ENCODE measurements at regions of chr1 and their contacts with region 1.

Region 1: DNA sequence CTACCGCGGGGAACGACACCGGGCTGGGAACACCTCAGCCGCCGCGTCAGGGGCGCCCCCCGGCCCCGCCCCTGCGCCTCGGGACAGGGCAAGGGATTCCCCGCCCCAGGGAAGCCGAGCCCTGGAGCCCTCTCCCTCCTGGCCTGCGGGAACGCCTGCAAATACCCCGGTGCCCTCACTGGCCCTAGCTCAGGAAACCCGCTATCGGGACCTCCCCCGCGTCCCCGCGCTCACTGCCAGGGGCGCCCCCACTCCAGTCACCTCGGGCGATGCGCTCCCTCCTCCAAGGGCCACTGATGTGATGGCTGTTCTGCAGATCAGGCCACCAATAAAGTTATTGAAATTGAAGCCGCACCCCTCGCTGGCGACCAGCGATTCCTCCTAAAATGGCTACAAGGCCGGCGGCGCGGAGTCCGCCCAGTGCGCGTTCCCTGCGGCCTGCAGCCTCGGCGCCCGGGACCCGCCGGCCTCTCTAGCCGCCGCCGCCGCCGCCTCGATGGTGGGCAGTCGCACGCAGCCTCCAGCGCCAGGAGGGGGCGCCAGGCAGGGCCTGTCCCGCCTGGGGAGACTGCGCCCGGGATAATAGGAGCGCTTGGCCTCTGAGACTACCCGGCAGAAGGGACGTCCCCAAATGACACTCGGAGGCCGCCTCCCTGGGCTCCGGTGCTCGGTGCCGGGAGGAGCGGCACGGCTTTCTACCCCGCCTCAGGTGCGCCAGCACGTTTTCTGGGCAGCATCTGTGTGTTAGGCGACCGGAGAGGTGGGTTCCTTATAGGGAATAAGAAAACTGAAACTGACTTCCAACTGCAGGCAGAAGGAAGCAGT is at the start of gene PRKAB2:
- DNase-seq: peak; percentile 77
- ATAC-seq: peak; percentile 92
- H3K4me3 ChIP-seq: peak within 1 kb of the TSS; percentile 93
- H3K27ac ChIP-seq: peak within 1 kb of the TSS; percentile 91
- H3K4me1 ChIP-seq: no peaks in the 10 kb centered on the region
- H3K27me3 ChIP-seq: no peaks in the 10 kb centered on the region
- CTCF ChIP-seq: peak; percentile 76 to 85 (median 84)
- EP300 ChIP-seq: peak in 1 of 2 experiments; percentile 11; a peak in 1 of 4 replicates
- POLR2A ChIP-seq: peak; percentile 84
- RAD21 ChIP-seq: peak; percentile 60
- polyA plus RNA-seq, gene PRKAB2: 2.2 to 2.7 TPM

Region 2: DNA sequence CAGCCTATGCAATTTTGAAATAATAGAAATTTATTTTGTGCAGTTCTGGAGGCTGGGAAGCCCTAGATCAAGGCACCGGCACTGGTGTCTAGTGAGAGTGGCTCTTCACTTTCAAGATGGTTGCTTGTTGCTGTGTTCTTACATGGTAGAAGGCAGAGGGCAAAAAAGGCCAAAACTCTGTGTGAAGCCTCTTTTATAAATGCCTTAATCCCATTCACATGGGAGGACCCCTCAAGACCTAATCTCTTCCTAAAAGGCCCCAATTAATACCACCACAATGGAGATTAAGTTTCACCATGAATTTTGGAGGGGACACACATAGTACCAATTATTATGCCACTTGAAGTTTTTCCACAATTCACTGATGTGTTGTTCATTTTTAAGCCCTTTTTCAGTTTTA is 21.1 kb before region 1 on chr1:
- CTCF ChIA-PET with region 1: no interaction called
- POLR2A ChIA-PET with region 1: no interaction called
- RAD21 ChIA-PET with region 1: no interaction called
- SMC1A ChIA-PET with region 1: no interaction called
- in situ Hi-C with region 1: no loop called
- intact Hi-C with region 1: no loop called
- DNase-seq: no peak
- ATAC-seq: no peak
- H3K4me3 ChIP-seq: no peak overlapping the region
- H3K27ac ChIP-seq: no peak overlapping the region
- H3K4me1 ChIP-seq: no peaks in the 10 kb centered on the region
- H3K27me3 ChIP-seq: no peaks in the 10 kb centered on the region
- CTCF ChIP-seq: no peak
- EP300 ChIP-seq: no peak
- POLR2A ChIP-seq: no peak
- RAD21 ChIP-seq: no peak

Region 3: GRCh38 chr1:147162093-147162492 is 10.3 kb before region 1 on chr1:
- CTCF ChIA-PET with region 1: interaction called, 13 read pairs
- POLR2A ChIA-PET with region 1: no interaction called
- RAD21 ChIA-PET with region 1: interaction called, 3 read pairs
- SMC1A ChIA-PET with region 1: interaction called, 14 read pairs
- in situ Hi-C with region 1: no loop called
- intact Hi-C with region 1: no loop called
- DNase-seq: no peak
- ATAC-seq: no peak
- H3K4me3 ChIP-seq: no peak overlapping the region
- H3K27ac ChIP-seq: no peak overlapping the region
- H3K4me1 ChIP-seq: no peaks in the 10 kb centered on the region
- H3K27me3 ChIP-seq: no peaks in the 10 kb centered on the region
- CTCF ChIP-seq: no peak
- EP300 ChIP-seq: no peak
- POLR2A ChIP-seq: no peak
- RAD21 ChIP-seq: no peak

Region 4: DNA sequence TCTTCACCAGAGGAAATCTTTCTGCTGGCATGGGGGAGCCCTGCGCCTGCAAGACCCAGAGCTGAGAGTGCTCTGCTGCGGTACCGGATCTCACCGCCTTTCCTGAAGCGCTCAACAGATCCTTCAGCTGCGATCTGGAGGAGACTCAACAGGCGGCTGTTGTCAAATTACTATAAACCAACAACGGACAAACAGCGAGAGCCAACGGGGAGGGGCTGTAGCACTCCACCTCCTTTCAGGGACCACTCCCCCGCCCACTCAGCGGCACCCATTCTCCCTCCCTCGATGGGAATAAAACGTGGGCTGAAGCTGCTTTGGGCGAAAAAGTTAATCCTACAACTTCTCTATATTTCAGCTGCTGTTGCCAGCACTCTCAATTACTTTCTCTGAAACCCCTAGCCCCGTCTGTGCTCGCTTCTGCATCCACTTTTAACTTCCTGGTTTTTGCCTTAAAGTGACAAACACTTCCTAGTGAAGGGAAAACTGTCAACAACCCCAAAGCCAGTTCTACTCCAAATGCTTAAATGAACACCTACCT is 52.9 kb after region 1 on chr1 and contains the start of gene FMO5:
- CTCF ChIA-PET with region 1: interaction called, 3 read pairs
- POLR2A ChIA-PET with region 1: interaction called, 3 read pairs
- RAD21 ChIA-PET with region 1: no interaction called
- SMC1A ChIA-PET with region 1: no interaction called
- in situ Hi-C with region 1: no loop called
- intact Hi-C with region 1: loop called (anchors 5 kb)
- DNase-seq: no peak
- ATAC-seq: peak; percentile 96
- H3K4me3 ChIP-seq: peak within 1 kb of the TSS; percentile 88
- H3K27ac ChIP-seq: 0 out of 2 replicates have a peak within 1 kb of the TSS, but pooled peaks have one; percentile 13
- H3K4me1 ChIP-seq: 0 out of 2 replicates have a peak, but pooled peaks cover 3% of the 10 kb centered on the region
- H3K27me3 ChIP-seq: peaks cover 0 to 2% of the 10 kb centered on the region in 2 experiments; a peak in 1 of 4 replicates
- CTCF ChIP-seq: 0 out of 6 replicates have a peak, but pooled peaks of 1 of the 3 experiments have one; percentile 9
- EP300 ChIP-seq: no peak
- POLR2A ChIP-seq: peak; percentile 33; the same call in 1 of the 2 replicates
- RAD21 ChIP-seq: no peak
- polyA plus RNA-seq, gene FMO5: 0.05 to 0.24 TPM

Region 5: DNA sequence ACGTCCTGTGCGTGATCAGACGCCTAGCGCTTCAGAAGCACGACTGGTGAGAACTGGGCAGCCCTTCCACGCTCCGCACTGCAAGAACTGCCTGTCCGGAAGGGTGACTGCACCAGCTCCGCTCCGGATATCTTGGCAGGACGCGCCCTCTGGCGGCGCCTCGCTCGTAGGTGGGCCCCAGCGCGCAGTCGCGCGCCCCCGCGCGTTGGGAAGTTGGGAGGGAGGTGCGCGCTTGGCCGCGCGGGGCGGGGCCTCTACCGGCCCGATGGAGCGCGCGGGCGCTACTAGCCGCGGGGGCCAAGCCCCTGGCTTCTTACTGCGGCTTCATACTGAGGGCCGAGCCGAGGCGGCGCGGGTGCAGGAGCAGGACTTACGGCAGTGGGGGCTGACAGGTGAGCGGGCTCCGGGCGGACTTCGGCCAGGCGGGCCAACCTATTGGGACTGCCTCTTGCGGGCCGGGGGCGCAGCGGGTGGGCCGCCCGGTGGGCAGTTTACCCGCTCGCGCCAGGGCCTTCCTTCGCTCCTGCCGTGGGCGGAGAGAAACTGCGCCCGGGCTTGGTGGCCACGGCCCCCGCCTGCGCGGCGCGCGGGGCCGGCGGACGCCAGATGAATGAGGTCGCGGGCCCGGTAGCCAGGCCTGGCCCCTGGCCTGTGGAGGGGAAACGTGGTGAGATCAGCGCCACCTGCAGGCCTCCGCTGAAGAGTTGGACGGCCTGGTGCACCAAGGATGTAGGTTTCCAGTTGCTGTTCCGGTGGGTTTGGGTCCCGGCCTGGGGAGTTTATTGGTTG is 70.3 kb after region 1 on chr1 and contains the start of gene CHD1L:
- CTCF ChIA-PET with region 1: interaction called, 54 read pairs
- POLR2A ChIA-PET with region 1: interaction called, 4 read pairs
- RAD21 ChIA-PET with region 1: interaction called, 11 read pairs
- SMC1A ChIA-PET with region 1: interaction called, 12 read pairs
- in situ Hi-C with region 1: loop called (anchors 5 kb)
- intact Hi-C with region 1: loop called (anchors 1 kb)
- DNase-seq: peak; percentile 73
- ATAC-seq: peak; percentile 93
- H3K4me3 ChIP-seq: peak within 1 kb of the TSS; percentile 76
- H3K27ac ChIP-seq: peak within 1 kb of the TSS; percentile 70
- H3K4me1 ChIP-seq: peaks cover 16% of the 10 kb centered on the region
- H3K27me3 ChIP-seq: no peaks in the 10 kb centered on the region; a peak in 1 of 4 replicates
- CTCF ChIP-seq: peak; percentile 89 to 99 (median 93)
- EP300 ChIP-seq: 0 out of 4 replicates have a peak, but pooled peaks of 1 of the 2 experiments have one; percentile 32
- POLR2A ChIP-seq: peak; percentile 88
- RAD21 ChIP-seq: peak; percentile 89
- polyA plus RNA-seq, gene CHD1L: 21.2 to 33.0 TPM

Measured in GM12878 (cell line).